K562 (cell line): ENCODE measurements at regions of chr9 and their contacts with region 1.

Region 1: GRCh38 chr9:70602321-70603019 is 188.0 kb upstream of the KLF9 start:
- DNase-seq: peak; percentile 25 to 60 (median 41)
- ATAC-seq: peak; percentile 93
- H3K4me3 ChIP-seq: no peak overlapping the region
- H3K27ac ChIP-seq: no peak overlapping the region
- H3K4me1 ChIP-seq: peaks cover 2 to 11% of the 10 kb centered on the region in 2 experiments; a peak in 4 of 5 replicates
- H3K27me3 ChIP-seq: no peaks in the 10 kb centered on the region
- CTCF ChIP-seq: peak; percentile 63 to 84 (median 64)
- EP300 ChIP-seq: no peak
- POLR2A ChIP-seq: no peak
- RAD21 ChIP-seq: peak; percentile 84 to 86

Region 2: GRCh38 chr9:69971643-69972449 is 630.6 kb before region 1 on chr9:
- CTCF ChIA-PET with region 1: no interaction called
- POLR2A ChIA-PET with region 1: no interaction called
- in situ Hi-C with region 1: loop called (anchors 25 kb)
- intact Hi-C with region 1: loop called (anchors 2 kb)
- DNase-seq: peak; percentile 49 to 55 (median 54)
- ATAC-seq: peak; percentile 75
- H3K4me3 ChIP-seq: no peak overlapping the region
- H3K27ac ChIP-seq: no peak overlapping the region
- H3K4me1 ChIP-seq: no peaks in the 10 kb centered on the region
- H3K27me3 ChIP-seq: no peaks in the 10 kb centered on the region; a peak in 2 of 5 replicates
- CTCF ChIP-seq: peak; percentile 72 to 77 (median 76)
- EP300 ChIP-seq: no peak
- POLR2A ChIP-seq: no peak
- RAD21 ChIP-seq: peak; percentile 45 to 69; a peak in 3 of 4 replicates

Region 3: DNA sequence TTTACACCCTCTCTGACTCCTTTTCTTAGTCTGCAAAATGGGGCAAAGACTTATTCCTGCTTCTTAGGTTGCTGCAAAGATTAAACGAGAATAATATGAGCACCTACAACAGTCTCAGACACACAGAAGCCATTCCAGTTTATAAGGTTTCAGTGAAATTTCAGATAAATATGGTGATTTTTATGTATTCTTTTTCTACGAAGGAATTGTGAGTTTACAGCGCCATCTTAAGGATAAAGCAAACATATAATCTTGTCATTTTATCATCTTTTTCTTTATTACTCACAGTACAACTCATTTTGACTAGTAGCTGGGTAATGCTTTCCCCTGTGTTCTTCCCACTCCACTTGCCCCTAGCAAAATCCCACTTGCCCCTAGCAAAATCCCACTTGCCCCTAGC is 372.9 kb before region 1 on chr9:
- CTCF ChIA-PET with region 1: no interaction called
- POLR2A ChIA-PET with region 1: no interaction called
- in situ Hi-C with region 1: no loop called
- intact Hi-C with region 1: loop called (anchors 10 kb)
- DNase-seq: peak in 1 of 4 experiments; percentile 11
- ATAC-seq: peak; percentile 51
- H3K4me3 ChIP-seq: no peak overlapping the region
- H3K27ac ChIP-seq: no peak overlapping the region
- H3K4me1 ChIP-seq: no peaks in the 10 kb centered on the region; a peak in 1 of 5 replicates
- H3K27me3 ChIP-seq: no peaks in the 10 kb centered on the region; a peak in 1 of 5 replicates
- CTCF ChIP-seq: peak; percentile 15 to 52 (median 27); a peak in 3 of 6 replicates
- EP300 ChIP-seq: no peak
- POLR2A ChIP-seq: no peak
- RAD21 ChIP-seq: peak; percentile 13 to 60; a peak in 2 of 4 replicates

Region 4: GRCh38 chr9:70340572-70340971 is 261.9 kb before region 1 on chr9:
- CTCF ChIA-PET with region 1: interaction called, 12 read pairs
- POLR2A ChIA-PET with region 1: interaction called, 6 read pairs
- in situ Hi-C with region 1: loop called (anchors 5 kb)
- intact Hi-C with region 1: loop called (anchors 1 kb)
- DNase-seq: peak in 2 of 4 experiments; percentile 6 to 7
- ATAC-seq: no peak
- H3K4me3 ChIP-seq: no peak overlapping the region
- H3K27ac ChIP-seq: no peak overlapping the region
- H3K4me1 ChIP-seq: no peaks in the 10 kb centered on the region; a peak in 1 of 5 replicates
- H3K27me3 ChIP-seq: no peaks in the 10 kb centered on the region
- CTCF ChIP-seq: peak in 1 of 3 experiments; percentile 46; a peak in 3 of 6 replicates
- EP300 ChIP-seq: no peak
- POLR2A ChIP-seq: no peak
- RAD21 ChIP-seq: peak; percentile 44 to 67

Region 5: GRCh38 chr9:70352802-70353201 is 249.7 kb before region 1 on chr9:
- CTCF ChIA-PET with region 1: interaction called, 13 read pairs
- POLR2A ChIA-PET with region 1: no interaction called
- in situ Hi-C with region 1: no loop called
- intact Hi-C with region 1: no loop called
- DNase-seq: peak; percentile 6 to 12 (median 8)
- ATAC-seq: no peak
- H3K4me3 ChIP-seq: no peak overlapping the region
- H3K27ac ChIP-seq: no peak overlapping the region
- H3K4me1 ChIP-seq: no peaks in the 10 kb centered on the region
- H3K27me3 ChIP-seq: no peaks in the 10 kb centered on the region
- CTCF ChIP-seq: peak; percentile 7 to 56 (median 30); a peak in 3 of 6 replicates
- EP300 ChIP-seq: no peak
- POLR2A ChIP-seq: no peak
- RAD21 ChIP-seq: peak; percentile 65 to 73

Region 6: GRCh38 chr9:70500793-70501192 is 101.7 kb before region 1 on chr9:
- CTCF ChIA-PET with region 1: no interaction called
- POLR2A ChIA-PET with region 1: no interaction called
- in situ Hi-C with region 1: no loop called
- intact Hi-C with region 1: loop called (anchors 2 kb)
- DNase-seq: no peak
- ATAC-seq: no peak
- H3K4me3 ChIP-seq: no peak overlapping the region
- H3K27ac ChIP-seq: no peak overlapping the region
- H3K4me1 ChIP-seq: peaks cover 0 to 8% of the 10 kb centered on the region in 2 experiments; a peak in 3 of 5 replicates
- H3K27me3 ChIP-seq: no peaks in the 10 kb centered on the region
- CTCF ChIP-seq: no peak
- EP300 ChIP-seq: no peak
- POLR2A ChIP-seq: no peak
- RAD21 ChIP-seq: no peak

Region 7: DNA sequence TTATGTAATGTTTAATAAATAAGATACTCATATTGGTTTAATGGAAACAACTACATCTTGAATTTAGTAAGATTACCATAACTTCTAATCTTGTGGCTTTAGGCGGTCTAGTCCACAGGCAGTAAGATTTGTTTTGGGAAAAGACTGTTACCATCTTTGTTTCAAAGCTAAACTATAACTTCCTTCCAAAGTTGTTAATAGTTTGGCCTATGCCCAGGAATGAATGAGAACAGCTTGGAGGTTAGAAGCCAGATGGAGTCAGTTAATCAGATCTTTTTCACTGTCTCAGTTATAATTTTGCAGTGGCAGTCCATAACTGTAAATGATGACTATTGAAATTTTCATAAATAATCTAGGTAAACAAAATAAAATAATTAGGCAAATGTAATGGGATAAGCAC is 53.8 kb after region 1 on chr9:
- CTCF ChIA-PET with region 1: no interaction called
- POLR2A ChIA-PET with region 1: no interaction called
- in situ Hi-C with region 1: no loop called
- intact Hi-C with region 1: no loop called
- DNase-seq: no peak
- ATAC-seq: no peak
- H3K4me3 ChIP-seq: no peak overlapping the region
- H3K27ac ChIP-seq: no peak overlapping the region
- H3K4me1 ChIP-seq: no peaks in the 10 kb centered on the region
- H3K27me3 ChIP-seq: no peaks in the 10 kb centered on the region
- CTCF ChIP-seq: no peak
- EP300 ChIP-seq: no peak
- POLR2A ChIP-seq: no peak
- RAD21 ChIP-seq: no peak